Psoas muscle (tissue), 8 donors: ENCODE measurements at regions of chr6 and their contacts with region 1.

Region 1: DNA sequence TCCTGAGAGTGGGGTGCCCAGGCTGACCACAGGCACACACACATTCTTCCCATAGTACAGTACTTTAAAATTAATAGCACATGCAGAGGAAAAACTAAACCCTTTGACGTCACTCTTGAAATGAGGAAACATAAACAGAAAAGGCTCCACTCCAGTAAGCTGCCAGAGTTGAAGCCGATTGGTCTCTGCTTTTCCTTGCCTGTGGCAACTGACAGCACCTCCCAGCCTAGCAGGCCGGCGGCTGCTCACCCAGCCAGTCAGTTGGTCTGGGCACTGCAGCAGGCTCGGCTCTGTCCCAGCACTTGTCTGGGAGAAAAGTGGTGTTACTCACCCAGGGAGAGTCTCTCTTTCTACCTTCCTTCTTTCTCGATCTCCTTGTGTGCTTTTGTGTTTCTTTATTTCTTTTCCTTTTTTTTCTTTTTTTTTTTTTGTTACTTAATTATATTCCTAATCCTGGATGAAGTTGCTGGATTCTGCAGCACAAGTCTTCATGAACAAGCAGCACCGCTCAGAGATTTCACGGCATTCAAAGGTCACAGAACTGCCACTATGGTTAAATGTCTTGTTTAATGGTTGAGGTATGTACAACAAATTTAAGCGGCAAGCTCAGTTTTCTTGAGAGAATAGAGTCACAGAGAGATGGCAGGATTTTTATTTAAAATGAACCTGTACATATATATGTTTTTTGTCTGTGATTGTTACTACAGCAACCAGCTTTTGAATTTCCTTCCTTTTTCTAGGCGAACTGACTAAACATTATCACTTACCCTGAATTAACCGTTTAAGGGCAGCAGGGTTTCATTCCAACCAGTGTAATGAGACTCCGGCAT is at the start of gene PDE7B:
- DNase-seq: peak; percentile 83 to 93
- ATAC-seq: peak; percentile 94 to 98 (median 96)
- H3K4me3 ChIP-seq: peak within 1 kb of the TSS; percentile 66
- H3K27ac ChIP-seq: peak within 1 kb of the TSS; percentile 68
- H3K4me1 ChIP-seq: peaks cover 17% of the 10 kb centered on the region
- H3K27me3 ChIP-seq: no peaks in the 10 kb centered on the region
- CTCF ChIP-seq: no peak
- total RNA-seq, gene PDE7B: 2.7 to 4.6 (median 4.3) TPM

Region 2: DNA sequence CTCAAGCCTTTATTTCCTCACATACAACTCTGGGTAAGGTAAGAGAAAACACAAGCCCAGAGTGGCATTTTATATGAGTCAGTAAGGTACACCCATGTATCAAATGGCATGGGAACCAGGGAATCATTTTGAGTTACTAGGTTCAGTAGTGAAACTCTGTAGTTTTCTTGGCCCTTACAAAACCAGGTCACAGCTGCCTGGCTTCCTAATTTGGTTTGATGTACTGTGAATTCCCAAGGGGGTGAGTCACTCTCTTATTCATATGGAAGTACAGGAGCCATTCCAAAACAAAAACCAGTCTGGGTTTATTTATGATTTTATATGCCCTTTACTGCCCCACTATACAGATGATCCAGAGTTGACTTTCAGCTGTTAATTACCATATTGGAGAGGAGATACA is 70.5 kb after region 1 on chr6:
- intact Hi-C with region 1: loop called in 1 of 2 experiments (anchors 5 kb)
- DNase-seq: no peak
- ATAC-seq: peak; percentile 93 to 97 (median 96)
- H3K4me3 ChIP-seq: peak overlapping the region; percentile 28
- H3K27ac ChIP-seq: peak overlapping the region; percentile 66
- H3K4me1 ChIP-seq: peaks cover 47% of the 10 kb centered on the region
- H3K27me3 ChIP-seq: no peaks in the 10 kb centered on the region
- CTCF ChIP-seq: no peak